ENCODE measurements at regions of chr5 and their contacts with region 1.

Region 1: DNA sequence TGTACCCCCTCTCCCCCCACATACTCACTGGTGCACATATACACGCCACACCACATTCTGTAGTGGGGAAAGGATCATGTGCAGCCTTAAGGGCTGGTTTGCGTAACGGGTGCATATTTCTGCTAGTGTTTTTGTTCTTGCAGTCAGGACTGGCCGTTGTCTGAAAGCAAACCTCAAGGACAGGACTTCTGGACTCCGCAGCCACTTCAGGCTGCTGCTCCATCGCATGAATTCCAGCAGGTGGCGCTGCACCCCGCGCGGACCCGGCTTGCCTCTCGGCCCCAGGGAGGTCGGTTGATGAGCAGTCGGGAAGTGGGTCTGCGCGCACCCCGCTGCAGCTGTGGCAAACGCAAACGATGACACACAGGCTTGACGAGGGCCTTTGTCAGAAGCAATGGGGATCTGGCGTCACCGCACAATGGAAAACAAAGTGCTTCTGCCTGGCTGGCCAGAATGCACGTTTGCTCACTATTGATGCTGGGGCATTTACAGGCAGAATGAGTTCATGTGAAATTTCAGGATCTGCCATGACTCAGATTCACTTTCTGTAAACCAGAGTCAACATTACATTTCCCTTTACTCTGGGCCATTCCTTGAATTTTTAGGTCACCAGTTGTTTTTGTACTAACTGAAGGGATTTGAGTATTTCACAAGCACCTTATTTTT is 36.3 kb upstream of the GLRX start:
- DNase-seq: peak; percentile 92
- ATAC-seq: peak; percentile 77

Region 2: DNA sequence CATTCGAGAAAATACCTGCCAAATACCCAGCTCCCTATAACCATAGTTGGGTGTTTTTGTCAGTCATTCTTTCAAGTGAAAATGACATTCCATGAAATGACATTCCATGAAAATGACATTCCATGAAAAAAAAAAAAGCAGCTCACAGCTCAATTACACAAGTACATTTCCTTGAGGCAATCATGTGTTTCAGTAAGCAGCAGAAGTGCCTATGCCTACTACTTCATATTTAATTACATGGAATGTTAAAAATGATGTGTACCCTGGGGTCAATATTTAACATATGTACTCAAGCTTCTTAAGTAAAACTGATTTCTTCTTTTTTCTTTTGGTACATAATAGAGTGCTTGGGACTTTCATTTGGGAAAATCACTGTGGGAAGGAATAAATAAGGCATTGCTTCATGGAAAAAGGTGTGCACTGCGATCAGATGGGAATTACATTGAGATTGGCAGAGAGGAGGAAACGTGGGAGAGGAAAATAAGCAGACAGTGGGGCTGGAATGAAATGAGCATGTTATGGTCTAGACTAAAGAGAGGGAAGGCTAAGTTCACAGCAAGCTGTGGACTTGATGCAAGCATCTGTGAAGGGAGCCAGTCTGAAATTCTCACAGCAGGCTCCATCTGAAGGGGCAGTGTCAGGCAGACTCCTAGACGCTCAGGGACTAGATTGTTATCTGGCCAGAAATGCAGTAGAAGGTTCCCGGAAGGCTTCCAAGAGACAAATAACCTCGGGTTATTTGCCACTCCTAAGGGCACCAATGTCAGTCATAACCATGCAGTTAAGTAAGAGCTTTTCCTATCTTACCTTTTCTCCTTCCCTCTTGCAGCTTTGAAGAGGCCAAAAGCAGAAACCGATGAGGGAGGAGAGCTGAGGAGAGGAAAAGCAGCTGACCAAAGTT is 160.8 kb before region 1 on chr5:
- intact Hi-C with region 1: no loop called
- DNase-seq: no peak
- ATAC-seq: no peak

Region 3: GRCh38 chr5:95817440-95817839 is 41.4 kb before region 1 on chr5:
- intact Hi-C with region 1: no loop called
- DNase-seq: no peak
- ATAC-seq: peak; percentile 33

Region 4: DNA sequence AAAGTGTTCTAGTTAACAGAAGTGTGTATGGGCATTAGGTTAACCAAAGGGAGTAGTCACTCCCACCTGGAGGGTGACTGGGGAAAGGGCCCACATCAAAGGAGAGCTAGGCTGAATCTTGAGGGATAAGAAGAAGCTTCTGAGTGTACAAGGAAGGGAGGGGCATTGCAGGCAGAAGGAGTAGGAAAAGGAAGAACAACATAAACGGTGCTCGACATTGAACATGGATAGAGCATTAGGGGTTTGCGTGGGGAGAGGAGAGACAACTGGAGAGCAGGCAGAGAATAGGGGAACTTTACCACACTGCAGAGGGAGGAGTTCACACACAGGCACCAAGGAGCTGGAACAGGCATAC is 30.9 kb before region 1 on chr5:
- intact Hi-C with region 1: no loop called
- DNase-seq: no peak
- ATAC-seq: no peak

Region 5: DNA sequence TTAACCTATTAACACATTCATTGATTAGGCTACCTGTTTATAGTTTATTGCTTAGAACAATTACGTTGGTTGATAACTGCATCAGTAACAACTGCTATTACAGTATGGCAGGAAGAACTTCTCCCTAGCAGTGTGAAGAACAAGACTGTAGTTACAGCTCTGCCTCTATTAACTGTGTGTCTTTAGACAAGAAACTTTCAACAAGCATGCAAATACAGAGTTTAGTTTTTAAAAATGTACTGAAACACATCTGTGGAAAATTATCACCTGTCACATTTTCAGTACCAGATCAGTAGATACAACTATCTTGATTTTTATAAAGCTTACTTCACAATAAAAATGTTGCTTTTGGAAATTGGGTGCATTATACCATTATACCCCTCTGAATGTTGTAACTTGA is 80.7 kb after region 1 on chr5:
- intact Hi-C with region 1: no loop called
- DNase-seq: no peak
- ATAC-seq: no peak

Region 6: GRCh38 chr5:96235008-96235910 is 376.5 kb after region 1 on chr5:
- intact Hi-C with region 1: loop called (anchors 10 kb)
- DNase-seq: no peak
- ATAC-seq: peak; percentile 96

Region 7: GRCh38 chr5:96336351-96336985 is 477.7 kb after region 1 on chr5:
- intact Hi-C with region 1: loop called (anchors 2 kb)
- DNase-seq: no peak
- ATAC-seq: peak; percentile 83

Measured in Right ventricle myocardium superior (tissue), 1 donor.